CD14-positive monocyte (primary cell): ENCODE measurements at regions of chr9 and their contacts with region 1.

Region 1: DNA sequence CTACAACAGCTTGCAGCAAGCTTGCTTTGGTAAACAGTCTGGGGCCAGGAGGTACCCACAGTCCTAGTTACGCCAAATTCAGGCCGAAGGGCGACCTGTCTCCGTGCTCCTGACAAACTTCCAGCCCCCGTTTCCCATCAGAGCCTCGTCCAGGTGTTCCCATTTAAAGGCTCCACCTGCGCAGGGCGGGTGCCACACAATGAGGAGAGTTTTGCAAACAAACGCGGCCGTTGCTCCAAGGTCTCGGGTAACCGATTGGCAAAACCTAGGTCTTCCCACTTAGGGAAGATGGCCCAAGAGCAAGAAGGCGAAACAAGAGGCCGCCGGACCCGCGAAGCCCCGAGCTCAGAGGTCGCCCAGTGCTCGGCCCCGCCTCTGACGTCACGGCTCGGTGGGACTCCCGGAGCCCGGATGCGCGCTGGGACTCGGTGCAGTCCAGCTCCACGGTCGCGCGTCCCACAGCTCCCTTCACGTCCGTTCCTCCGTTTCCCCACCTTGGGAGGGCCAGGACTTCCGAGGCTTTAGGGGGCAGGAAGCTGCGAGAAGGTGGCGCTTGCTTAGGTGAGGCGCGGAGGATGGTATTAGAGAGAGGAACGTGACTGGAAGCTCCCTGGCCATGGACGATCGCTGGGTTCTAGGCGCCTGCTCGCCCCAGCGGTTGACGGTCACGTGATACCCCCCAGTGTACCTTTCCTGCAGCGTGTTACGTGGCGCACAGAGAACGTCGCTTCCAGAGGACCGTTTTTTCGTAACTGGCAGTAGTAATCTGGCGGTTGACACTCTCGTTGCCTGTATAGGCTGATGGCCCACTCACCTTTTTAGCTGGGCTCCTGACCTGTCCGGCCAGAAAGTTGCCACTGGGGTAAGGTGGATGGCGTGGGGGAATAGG is 41.8 kb upstream of the KDM4C start:
- DNase-seq: peak; percentile 28 to 54 (median 48)
- H3K4me3 ChIP-seq: peak overlapping the region; percentile 30 to 77 (median 55)
- H3K4me3 Mint-ChIP-seq: peak overlapping the region; percentile 83 to 91
- H3K27ac ChIP-seq: peak overlapping the region in 1 of 2 donors; percentile 71
- H3K27ac Mint-ChIP-seq: peak overlapping the region in 6 of 7 donors; percentile 35 to 90 (median 68)
- H3K4me1 ChIP-seq: peaks cover 14 to 31% of the 10 kb centered on the region in 2 donors
- H3K4me1 Mint-ChIP-seq: peaks cover 25% of the 10 kb centered on the region
- H3K27me3 ChIP-seq: no peaks in the 10 kb centered on the region
- H3K27me3 Mint-ChIP-seq: peaks cover 0 to 15% (median 9%) of the 10 kb centered on the region in 3 donors
- CTCF ChIP-seq: no peak

Region 2: GRCh38 chr9:6681147-6681956 is 34.6 kb before region 1 on chr9:
- intact Hi-C with region 1: loop called in 1 of 2 experiments (anchors 5 kb)
- DNase-seq: peak; percentile 97 to 98 (median 98)
- H3K4me3 ChIP-seq: peak overlapping the region; percentile 48 to 72 (median 68)
- H3K4me3 Mint-ChIP-seq: peak overlapping the region; percentile 83 to 95
- H3K27ac ChIP-seq: peak overlapping the region; percentile 96 to 98
- H3K27ac Mint-ChIP-seq: peak overlapping the region; percentile 98 to 99 (median 99)
- H3K4me1 ChIP-seq: peaks cover 43 to 47% of the 10 kb centered on the region in 2 donors
- H3K4me1 Mint-ChIP-seq: peaks cover 28% of the 10 kb centered on the region
- H3K27me3 ChIP-seq: no peaks in the 10 kb centered on the region
- H3K27me3 Mint-ChIP-seq: peaks cover 0 to 4% (median 0%) of the 10 kb centered on the region in 3 donors
- CTCF ChIP-seq: no peak

Region 3: DNA sequence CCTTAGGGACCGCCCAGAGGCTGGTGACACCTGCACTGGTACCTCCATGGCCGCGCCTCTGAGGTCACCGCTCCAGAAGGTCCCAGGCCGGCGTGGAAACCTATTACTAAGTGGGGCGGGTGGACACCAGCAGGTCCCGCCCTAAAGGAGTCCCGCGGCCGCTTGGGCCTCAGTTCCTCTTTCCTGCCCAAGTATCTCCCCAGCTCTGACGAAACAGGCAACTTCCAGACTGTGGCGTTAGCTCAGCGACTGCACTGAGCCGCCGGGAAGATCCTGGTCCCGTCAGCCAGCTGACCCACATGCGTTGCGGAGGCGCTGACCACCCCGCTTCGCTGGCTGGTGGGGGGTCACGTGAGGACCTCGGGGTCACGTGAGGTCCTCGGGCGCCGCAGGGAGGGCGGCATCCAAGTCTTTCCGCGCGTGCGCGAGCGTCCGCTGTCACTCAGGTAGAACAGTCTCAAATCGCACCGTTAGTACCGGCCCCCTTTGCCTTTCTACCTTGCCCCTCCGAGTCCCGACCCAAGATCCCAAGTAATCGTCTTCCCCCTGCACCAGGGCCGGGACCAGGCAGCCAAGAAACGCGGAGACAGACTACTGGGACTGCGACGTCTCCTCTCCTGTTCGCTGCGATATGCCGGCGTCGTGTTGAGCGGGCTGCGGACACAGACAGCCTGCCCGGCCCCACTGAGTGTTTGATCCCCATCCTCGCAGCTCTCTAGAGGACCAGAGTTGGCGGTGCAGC is 11.9 kb before region 1 on chr9:
- intact Hi-C with region 1: loop called in 1 of 2 experiments (anchors 1 kb)
- DNase-seq: peak; percentile 93 to 98 (median 96)
- H3K4me3 ChIP-seq: peak overlapping the region; percentile 48 to 83 (median 54)
- H3K4me3 Mint-ChIP-seq: peak overlapping the region; percentile 98
- H3K27ac ChIP-seq: peak overlapping the region; percentile 86 to 97
- H3K27ac Mint-ChIP-seq: peak overlapping the region; percentile 75 to 98 (median 92)
- H3K4me1 ChIP-seq: peaks cover 11 to 16% of the 10 kb centered on the region in 2 donors
- H3K4me1 Mint-ChIP-seq: peaks cover 19% of the 10 kb centered on the region
- H3K27me3 ChIP-seq: no peaks in the 10 kb centered on the region
- H3K27me3 Mint-ChIP-seq: peaks cover 0 to 9% (median 3%) of the 10 kb centered on the region in 3 donors
- CTCF ChIP-seq: no peak